AG04450 (cell line): ENCODE measurements at regions of chr9 and their contacts with region 1.

Region 1: DNA sequence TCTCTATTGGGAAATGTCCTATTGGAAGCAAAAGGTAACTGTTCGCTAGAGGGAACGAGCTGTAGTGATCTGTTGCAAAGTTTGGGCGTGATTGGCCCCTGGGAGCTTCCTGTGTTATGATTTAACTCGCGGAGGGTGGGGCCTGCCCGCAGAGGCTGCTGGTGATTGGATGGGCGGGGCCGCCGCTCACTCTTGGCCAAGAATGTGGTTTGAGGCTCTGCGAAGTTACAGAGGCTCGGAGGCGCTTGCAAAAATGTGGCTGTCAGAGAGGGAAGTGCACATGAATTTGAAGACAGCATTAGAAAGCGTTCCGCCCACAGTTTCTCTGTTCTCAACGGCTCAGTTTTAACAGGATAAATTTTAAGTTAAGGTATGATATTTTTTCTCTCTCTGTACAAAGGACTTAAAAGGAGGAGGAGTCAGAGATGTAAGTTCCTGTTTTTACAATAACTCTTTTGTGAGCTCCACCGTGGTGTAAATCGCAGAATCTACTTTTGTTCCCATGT is 46.9 kb downstream of the CNTRL start:
- DNase-seq: peak; percentile 88
- H3K4me3 ChIP-seq: peak overlapping the region; percentile 67
- H3K27ac ChIP-seq: no peak overlapping the region
- H3K27me3 ChIP-seq: no peaks in the 10 kb centered on the region
- CTCF ChIP-seq: peak; percentile 41

Region 2: DNA sequence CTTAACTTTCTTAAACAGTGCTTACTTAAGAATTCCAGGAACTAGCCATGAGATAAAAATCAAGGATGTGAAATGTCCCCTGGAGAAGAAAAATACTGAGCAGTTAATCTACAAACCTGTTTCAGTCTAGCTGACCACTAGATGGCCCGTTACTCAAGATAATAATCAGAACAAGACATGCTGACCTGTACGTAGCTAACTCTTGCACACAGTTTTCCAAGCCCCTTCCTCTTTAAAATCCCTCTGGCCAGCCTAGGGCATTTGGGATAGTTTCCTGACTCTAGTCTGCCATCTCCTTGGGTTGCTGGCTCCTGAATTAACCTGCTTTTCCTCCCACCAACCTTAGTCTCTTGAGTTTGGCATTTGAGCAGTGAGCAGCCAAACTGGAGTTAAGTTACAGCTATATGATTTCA is 135.8 kb before region 1 on chr9:
- CTCF ChIA-PET with region 1: interaction called, 14 read pairs
- POLR2A ChIA-PET with region 1: no interaction called
- DNase-seq: peak; percentile 38
- H3K4me3 ChIP-seq: no peak overlapping the region
- H3K27ac ChIP-seq: no peak overlapping the region
- H3K27me3 ChIP-seq: no peaks in the 10 kb centered on the region
- CTCF ChIP-seq: peak; percentile 70

Region 3: DNA sequence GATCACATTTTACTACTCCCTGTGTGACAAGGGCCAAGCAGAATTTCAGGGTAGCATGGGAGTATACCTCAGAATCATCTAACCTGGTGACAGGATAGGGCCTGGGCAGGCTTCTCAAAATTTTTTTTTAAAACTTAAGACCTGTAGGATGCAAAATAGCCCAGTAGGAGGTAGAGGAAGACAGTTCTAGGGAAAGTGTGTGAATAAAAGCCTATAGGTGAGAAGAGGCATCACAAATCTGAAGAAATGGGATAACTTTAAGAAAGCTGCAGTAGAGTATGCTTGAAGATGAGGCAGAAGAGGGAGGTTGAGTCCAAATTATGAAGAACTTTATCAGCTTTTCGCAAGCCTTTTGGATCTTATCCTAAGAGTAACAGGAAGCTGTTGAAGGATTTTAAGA is 14.6 kb before region 1 on chr9:
- CTCF ChIA-PET with region 1: interaction called, 10 read pairs
- POLR2A ChIA-PET with region 1: no interaction called
- DNase-seq: no peak
- H3K4me3 ChIP-seq: no peak overlapping the region
- H3K27ac ChIP-seq: no peak overlapping the region
- H3K27me3 ChIP-seq: no peaks in the 10 kb centered on the region
- CTCF ChIP-seq: no peak

Region 4: DNA sequence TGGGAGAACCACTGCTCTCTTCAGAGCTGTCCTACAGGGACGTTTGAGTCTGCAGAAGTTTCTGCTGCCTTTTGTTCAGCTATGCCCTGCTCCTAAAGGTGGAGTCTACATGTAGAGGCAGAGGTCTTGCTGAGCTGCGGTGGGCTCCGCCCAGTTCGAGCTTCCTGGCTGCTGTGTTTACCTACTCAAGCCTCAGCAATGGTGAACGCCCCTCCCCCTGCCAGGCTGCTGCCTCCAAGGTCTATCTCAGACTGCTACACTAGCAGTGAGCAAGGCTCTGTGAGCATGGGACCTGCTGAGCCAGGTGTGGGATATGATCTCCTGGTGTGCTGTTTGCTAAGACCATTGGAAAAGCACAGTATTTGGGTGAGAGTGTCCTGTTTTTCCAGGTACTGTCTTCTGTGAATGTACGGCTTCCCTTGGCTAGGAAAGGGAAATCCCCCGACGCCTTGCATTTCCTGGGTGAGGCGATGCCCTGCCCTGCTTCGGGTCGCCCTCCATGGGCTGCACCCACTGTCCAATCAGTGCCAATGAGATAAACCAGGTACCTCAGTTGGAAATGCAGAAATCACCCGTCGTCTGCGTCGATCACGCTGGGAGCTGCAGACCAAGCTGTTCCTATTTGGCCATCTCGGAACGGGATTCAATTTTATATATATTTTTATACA is 11.6 kb after region 1 on chr9:
- CTCF ChIA-PET with region 1: interaction called, 11 read pairs
- POLR2A ChIA-PET with region 1: no interaction called
- DNase-seq: no peak
- H3K4me3 ChIP-seq: no peak overlapping the region
- H3K27ac ChIP-seq: no peak overlapping the region
- H3K27me3 ChIP-seq: no peaks in the 10 kb centered on the region
- CTCF ChIP-seq: no peak

Region 5: DNA sequence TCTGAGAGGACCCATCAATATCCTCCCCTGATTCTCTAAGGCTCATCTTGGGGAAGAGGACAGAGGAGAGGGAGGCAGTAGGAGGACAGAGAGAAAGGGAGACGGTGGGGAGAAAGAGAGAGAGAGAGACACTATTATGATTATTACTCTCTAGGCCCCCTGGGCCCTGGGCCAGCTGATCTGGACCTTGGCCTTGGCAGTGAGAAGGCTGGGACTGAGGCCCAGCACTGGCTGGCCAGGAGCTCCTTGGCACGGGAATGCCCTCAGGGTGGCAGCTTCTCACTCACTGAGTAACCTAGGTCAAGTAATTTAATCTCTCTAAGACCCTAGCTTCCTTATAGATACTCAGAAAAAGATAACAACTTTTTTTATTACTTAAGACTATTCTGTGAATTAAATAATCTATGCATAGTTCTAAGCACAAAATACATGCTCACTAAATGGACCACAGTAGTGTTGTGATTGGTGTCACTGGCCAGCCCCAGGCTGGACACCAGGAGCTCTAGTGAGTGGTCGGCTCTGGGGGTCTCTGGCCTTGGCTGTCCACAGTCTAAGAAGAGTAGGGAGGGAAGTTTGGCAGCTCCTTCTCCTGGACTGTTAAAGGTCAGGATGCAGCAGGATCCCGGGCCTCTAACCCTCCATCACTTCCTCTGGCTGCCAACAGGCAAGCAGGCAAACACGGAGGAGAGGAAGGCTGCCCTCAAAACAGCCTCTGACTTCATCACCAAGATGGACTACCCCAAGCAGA is 196.3 kb after region 1 on chr9:
- CTCF ChIA-PET with region 1: no interaction called
- POLR2A ChIA-PET with region 1: no interaction called
- DNase-seq: no peak
- H3K4me3 ChIP-seq: no peak overlapping the region
- H3K27ac ChIP-seq: no peak overlapping the region
- H3K27me3 ChIP-seq: no peaks in the 10 kb centered on the region
- CTCF ChIP-seq: no peak